Activated CD4-positive, alpha-beta T cell treated with anti-CD3 and anti-CD28 coated beads, Interleukin-2, amount 10 ng/mL, durations not matched to agents 7 days and 5 days (primary cell): ENCODE measurements at regions of chr17 and their contacts with region 1.

Region 1: DNA sequence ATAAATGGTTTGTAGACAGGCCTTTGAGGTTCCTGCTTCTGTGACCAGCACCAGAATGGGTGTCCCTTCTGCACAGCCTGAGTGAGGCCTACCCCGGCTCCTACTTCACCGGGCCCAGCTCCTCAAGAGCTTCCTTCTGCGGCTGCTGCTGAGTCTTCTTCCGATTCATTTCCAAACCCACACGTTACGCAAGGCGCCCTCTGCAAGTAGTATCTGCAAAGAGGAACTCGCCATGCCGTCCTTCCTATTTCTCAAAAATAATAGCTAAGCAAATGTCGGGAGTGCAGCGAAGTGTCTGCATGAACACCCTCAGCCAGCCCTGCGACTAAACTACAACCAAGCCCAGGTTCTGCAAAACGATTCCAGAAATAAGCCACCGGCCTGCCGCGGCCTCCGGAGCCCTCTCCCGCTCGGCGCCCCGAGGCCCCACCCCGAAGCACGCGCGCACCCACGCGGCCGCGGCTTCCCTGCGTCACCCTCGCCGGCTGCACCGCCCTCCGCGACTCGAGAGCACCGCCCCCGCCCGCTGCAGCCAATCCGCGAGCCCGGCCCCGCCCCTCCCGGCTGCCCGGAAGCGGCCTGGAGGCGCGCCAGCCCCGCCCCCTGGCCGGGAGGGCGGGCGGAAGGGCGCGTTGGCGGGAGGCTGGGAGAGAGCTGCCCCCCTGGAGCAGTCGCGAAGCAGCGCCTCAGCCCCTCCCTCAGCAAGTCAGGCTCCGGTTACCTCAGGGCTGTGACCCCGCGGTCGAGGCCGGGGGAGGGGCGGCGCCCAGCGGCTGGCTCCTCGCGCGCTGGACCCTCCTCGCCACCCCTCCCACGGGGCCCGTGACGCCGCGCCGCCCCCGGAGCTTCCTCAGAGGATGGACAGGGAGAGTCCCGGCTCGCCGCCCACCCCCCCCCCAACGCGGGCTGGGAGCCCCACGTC is 8.3 kb downstream of the MNT start:
- DNase-seq: peak; percentile 96
- H3K4me3 Mint-ChIP-seq: peak overlapping the region; percentile 83
- H3K27ac Mint-ChIP-seq: peak overlapping the region; percentile 95
- H3K4me1 Mint-ChIP-seq: peaks cover 62% of the 10 kb centered on the region
- H3K27me3 Mint-ChIP-seq: no peaks in the 10 kb centered on the region

Region 2: DNA sequence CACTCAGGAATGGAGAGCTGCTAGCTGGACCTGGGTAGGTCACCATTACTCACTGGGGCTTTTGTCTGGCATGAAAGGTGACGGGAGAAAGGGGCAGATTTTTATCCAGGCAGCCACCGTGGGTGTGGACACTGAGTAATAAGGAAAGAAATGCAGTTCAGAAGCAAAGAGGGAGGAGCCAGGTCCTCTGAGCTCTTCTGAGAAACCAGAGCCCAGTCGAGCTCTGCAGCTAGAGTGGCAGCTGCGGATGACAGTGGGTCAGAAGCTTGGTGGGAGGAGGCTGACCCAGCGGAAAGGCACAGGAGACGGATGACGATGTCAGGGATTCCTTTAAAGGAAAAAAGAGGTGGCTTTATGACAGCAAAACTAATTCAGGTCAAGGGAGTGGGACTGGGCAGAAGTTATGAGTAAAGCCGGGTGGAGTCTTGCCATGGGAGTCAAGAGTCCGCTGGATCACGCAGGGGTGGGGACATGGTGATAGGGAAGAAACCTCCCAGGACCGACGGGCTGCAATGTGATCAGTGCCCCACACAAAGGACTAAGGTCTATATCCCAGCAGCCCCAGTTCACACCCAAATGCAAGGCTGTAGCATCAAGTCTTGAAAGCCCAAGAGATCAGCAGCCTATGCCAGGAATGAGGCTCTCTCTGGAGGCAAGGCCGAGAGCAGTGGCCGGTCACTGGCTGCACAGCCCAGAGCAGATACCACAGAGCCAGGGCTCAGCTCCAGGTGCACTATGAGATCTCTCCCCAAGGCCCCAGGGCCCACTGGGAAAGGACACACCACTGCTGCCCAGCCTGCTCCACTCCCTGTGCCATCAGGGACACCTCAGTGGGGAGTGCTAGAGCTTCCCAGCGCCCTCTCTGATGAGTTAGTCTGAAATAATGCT is 14.6 kb after region 1 on chr17:
- CTCF ChIA-PET with region 1: interaction called, 10 read pairs
- POLR2A ChIA-PET with region 1: interaction called, 4 read pairs
- DNase-seq: no peak
- H3K4me3 Mint-ChIP-seq: no peak overlapping the region
- H3K27ac Mint-ChIP-seq: no peak overlapping the region
- H3K4me1 Mint-ChIP-seq: peaks cover 31% of the 10 kb centered on the region
- H3K27me3 Mint-ChIP-seq: no peaks in the 10 kb centered on the region